H1 (cell line): ENCODE measurements at regions of chr2 and their contacts with region 1.

Region 1: DNA sequence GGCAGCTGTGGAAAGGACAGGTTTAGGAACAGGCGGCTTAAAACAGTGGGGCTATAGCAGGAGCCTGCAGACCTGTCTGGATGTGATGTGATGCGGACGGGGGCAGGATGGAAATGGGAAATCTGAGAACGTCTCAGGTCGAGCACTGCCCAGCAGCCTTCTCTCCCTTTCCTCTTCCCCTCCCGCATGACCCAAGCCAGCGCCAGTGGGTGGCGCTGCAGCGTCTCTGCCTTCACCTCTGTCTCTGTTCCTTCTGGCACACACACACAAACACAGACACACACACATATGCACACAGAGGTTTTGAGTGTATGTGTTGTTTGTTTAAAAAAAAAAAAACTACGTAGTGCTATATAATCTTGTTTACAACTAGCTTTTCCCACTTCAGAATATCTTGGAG is 82.0 kb upstream of the SLC66A3 start:
- DNase-seq: peak; percentile 60 to 83
- H3K4me3 ChIP-seq: no peak overlapping the region
- H3K27ac ChIP-seq: no peak overlapping the region
- H3K4me1 ChIP-seq: peaks cover 0 to 6% (median 4%) of the 10 kb centered on the region in 4 experiments; a peak in 4 of 7 replicates
- H3K27me3 ChIP-seq: no peaks in the 10 kb centered on the region
- CTCF ChIP-seq: peak; percentile 76 to 96 (median 93)
- EP300 ChIP-seq: no peak
- POLR2A ChIP-seq: no peak
- RAD21 ChIP-seq: peak; percentile 61 to 73

Region 2: DNA sequence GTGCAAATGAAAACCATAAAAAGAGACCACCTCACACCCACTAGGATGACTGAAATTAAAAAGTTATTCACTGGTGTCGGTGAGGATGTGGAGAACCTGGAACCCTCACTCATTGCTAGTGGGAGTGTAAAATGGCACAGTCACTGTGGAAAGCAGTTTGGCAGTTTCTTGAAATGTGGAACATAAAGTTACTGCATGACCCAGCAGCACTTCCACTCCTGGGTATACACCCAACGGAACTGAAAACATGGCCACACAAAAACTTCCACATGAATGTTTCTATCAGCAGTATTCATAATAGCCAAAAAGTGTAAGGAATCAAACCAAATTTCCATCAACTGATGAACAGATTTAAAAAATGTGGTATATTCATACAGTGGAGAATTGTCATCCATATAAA is 16.9 kb after region 1 on chr2:
- CTCF ChIA-PET with region 1: interaction called, 14 read pairs
- POLR2A ChIA-PET with region 1: no interaction called
- DNase-seq: no peak
- H3K4me3 ChIP-seq: no peak overlapping the region
- H3K27ac ChIP-seq: no peak overlapping the region
- H3K4me1 ChIP-seq: peaks cover 0 to 4% (median 1%) of the 10 kb centered on the region in 4 experiments; a peak in 3 of 7 replicates
- H3K27me3 ChIP-seq: no peaks in the 10 kb centered on the region
- CTCF ChIP-seq: no peak
- EP300 ChIP-seq: no peak
- POLR2A ChIP-seq: no peak
- RAD21 ChIP-seq: no peak

Region 3: DNA sequence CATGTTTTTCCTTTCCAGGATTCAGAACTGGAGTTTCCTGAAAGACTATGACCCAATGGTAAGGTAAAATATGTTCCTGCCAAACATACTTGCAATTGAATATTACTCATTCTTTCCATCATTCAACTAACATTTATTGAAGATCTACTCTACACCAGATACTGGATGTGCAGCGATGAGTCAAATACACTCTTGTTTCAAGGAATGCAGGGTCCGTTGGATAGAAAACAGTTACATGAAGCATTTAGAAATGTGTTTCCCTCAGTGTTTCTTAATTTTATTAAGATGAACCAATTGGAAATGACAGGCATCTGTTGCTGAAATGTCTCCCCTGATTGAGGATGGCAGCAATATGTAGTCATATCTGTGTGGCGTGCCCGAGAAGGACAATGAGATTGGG is 67.2 kb after region 1 on chr2:
- CTCF ChIA-PET with region 1: no interaction called
- POLR2A ChIA-PET with region 1: no interaction called
- DNase-seq: no peak
- H3K4me3 ChIP-seq: no peak overlapping the region
- H3K27ac ChIP-seq: no peak overlapping the region
- H3K4me1 ChIP-seq: no peaks in the 10 kb centered on the region
- H3K27me3 ChIP-seq: no peaks in the 10 kb centered on the region
- CTCF ChIP-seq: no peak
- EP300 ChIP-seq: no peak
- POLR2A ChIP-seq: no peak
- RAD21 ChIP-seq: no peak